Right ventricle myocardium inferior (tissue), 1 donor: ENCODE measurements at regions of chr5 and their contacts with region 1.

Region 1: GRCh38 chr5:83564069-83564749 is 92.7 kb downstream of the VCAN start:
- DNase-seq: no peak
- ATAC-seq: peak; percentile 47

Region 2: GRCh38 chr5:82312373-82312856 is 1251.8 kb before region 1 on chr5:
- intact Hi-C with region 1: loop called (anchors 2 kb)
- DNase-seq: no peak
- ATAC-seq: peak; percentile 86

Region 3: GRCh38 chr5:82641331-82642003 is 922.7 kb before region 1 on chr5:
- intact Hi-C with region 1: loop called (anchors 1 kb)
- DNase-seq: no peak
- ATAC-seq: peak; percentile 91

Region 4: DNA sequence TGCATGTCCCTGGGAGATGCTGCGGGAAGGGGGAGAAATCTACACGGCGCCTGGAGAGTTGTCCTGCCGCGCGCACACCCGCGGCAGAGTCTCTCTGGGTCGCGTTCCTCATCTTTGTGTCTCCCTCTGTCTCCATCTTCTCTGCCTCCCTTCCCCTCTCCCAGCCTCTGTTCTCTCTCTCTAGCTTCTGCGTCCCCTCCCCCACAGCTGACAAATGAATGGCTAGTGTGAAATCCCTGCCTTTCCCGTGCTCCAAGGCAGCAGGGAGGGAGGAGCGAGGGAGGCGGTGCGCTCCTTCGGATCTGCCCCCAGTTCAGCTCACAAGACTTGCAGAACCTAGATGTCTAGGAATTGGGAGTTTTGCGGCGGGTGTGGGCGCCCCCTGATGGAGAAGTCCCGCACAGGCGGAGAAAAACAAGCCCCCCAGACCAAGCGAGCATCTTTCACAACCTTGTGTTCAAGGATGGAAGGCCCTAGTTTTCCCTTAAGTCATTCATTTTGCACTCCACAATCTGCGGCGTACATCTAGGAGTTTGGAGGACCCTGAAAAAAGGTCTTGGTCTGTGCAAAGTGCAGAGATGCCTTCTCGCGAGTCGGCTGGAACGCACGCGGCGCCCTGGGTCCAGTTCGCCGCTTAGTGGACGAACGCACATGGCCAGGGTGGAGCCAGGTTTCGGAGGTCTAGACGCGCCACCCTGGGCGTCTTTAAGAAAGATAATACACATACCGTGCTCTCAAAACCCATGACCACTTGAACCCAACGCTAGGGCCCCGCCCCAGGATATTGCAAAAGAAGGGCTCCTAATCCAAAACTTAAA is 90.7 kb before region 1 on chr5:
- intact Hi-C with region 1: loop called (anchors 2 kb)
- DNase-seq: peak; percentile 92
- ATAC-seq: peak; percentile 83